PC-3 (cell line): ENCODE measurements at regions of chr11 and their contacts with region 1.

Region 1: GRCh38 chr11:117178210-117179034 is at the start of gene SIDT2:
- DNase-seq: peak; percentile 98
- ATAC-seq: peak; percentile 88
- H3K4me3 ChIP-seq: peak within 1 kb of the TSS; percentile 97
- H3K27ac ChIP-seq: peak within 1 kb of the TSS; percentile 32
- H3K4me1 ChIP-seq: peaks cover 24% of the 10 kb centered on the region
- H3K27me3 ChIP-seq: no peaks in the 10 kb centered on the region
- CTCF ChIP-seq: no peak
- total RNA-seq, gene SIDT2: 13.6 and 22.7 TPM in 2 replicates

Region 2: GRCh38 chr11:116948391-116948790 is 230.0 kb before region 1 on chr11:
- CTCF ChIA-PET with region 1: no interaction called
- POLR2A ChIA-PET with region 1: interaction called, 15 read pairs
- intact Hi-C with region 1: no loop called
- DNase-seq: peak; percentile 85
- ATAC-seq: peak; percentile 84
- H3K4me3 ChIP-seq: 0 out of 2 replicates have a peak overlapping the region, but pooled peaks have one; percentile 29
- H3K27ac ChIP-seq: peak overlapping the region; percentile 25
- H3K4me1 ChIP-seq: peaks cover 24% of the 10 kb centered on the region
- H3K27me3 ChIP-seq: no peaks in the 10 kb centered on the region
- CTCF ChIP-seq: no peak

Region 3: GRCh38 chr11:117143871-117144476 is 34.4 kb before region 1 on chr11 and contains the start of gene PAFAH1B2:
- CTCF ChIA-PET with region 1: interaction called, 3 read pairs
- POLR2A ChIA-PET with region 1: interaction called, 4 read pairs
- intact Hi-C with region 1: loop called (anchors 5 kb)
- DNase-seq: peak; percentile 98
- ATAC-seq: peak; percentile 91
- H3K4me3 ChIP-seq: peak within 1 kb of the TSS; percentile 81
- H3K27ac ChIP-seq: peak within 1 kb of the TSS; percentile 76
- H3K4me1 ChIP-seq: peaks cover 13% of the 10 kb centered on the region; the same call in 1 of the 2 replicates
- H3K27me3 ChIP-seq: no peaks in the 10 kb centered on the region
- CTCF ChIP-seq: no peak
- total RNA-seq, gene PAFAH1B2: 88.6 and 91.6 TPM in 2 replicates

Region 4: DNA sequence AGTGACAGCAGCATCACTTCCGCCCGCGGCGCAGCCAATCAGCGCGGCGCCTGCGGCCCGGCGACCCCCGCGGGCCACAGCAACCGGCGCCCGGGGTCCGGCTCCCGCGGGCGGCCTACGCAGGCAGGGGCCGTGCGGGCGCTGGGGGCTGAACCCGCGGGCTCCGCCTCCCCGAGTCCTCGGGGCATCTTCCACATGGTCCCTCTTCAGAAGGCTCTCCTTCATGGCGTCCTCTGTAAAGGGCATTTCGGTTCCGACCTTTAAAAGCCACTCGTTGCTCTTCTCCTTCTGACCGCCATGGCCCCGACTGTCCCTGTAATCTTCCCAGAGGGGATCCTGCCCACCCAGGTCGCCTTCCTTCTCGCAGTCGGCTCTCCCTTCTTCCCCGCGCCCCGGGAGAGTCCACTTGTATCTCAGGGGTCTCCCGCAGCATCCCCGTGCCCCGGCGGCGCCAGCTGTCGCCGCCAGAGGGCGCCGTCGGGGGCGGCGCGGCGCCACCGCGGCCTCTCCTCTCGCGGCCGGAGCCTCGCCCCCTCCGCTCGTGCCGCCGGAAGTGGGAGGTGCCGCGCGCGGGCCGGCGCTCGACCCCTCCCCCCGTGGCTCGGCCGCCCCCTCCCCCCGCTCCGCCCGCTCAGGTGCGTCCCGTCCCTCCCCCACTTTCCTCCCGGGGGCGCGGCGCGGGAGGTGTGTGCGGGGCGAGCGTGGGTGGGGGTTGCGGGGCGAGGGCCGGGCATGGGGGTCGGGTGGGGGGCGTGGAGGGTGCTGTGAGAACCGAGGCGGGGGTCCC is 53.9 kb after region 1 on chr11 and contains the start of gene RNF214:
- CTCF ChIA-PET with region 1: interaction called, 3 read pairs
- POLR2A ChIA-PET with region 1: no interaction called
- intact Hi-C with region 1: loop called (anchors 2 kb)
- DNase-seq: peak; percentile 93
- ATAC-seq: peak; percentile 78
- H3K4me3 ChIP-seq: peak within 1 kb of the TSS; percentile 86
- H3K27ac ChIP-seq: peak within 1 kb of the TSS; percentile 25
- H3K4me1 ChIP-seq: peaks cover 23% of the 10 kb centered on the region
- H3K27me3 ChIP-seq: no peaks in the 10 kb centered on the region
- CTCF ChIP-seq: peak; percentile 87
- total RNA-seq, gene RNF214: 7.4 TPM in 2 replicates

Region 5: GRCh38 chr11:117313091-117313490 is 134.7 kb after region 1 on chr11:
- CTCF ChIA-PET with region 1: no interaction called
- POLR2A ChIA-PET with region 1: no interaction called
- intact Hi-C with region 1: no loop called
- DNase-seq: no peak
- ATAC-seq: no peak
- H3K4me3 ChIP-seq: no peak overlapping the region
- H3K27ac ChIP-seq: no peak overlapping the region
- H3K4me1 ChIP-seq: peaks cover 20% of the 10 kb centered on the region
- H3K27me3 ChIP-seq: no peaks in the 10 kb centered on the region
- CTCF ChIP-seq: no peak